Activated CD4-positive, alpha-beta T cell treated with anti-CD3 and anti-CD28 coated beads, Interleukin-2, amount 10 ng/mL, durations not matched to agents 24 days and 14 days (primary cell): ENCODE measurements at regions of chr7 and their contacts with region 1.

Region 1: GRCh38 chr7:142482891-142483658 is 225.2 kb upstream of the PRSS58 start:
- DNase-seq: peak; percentile 86
- H3K4me3 Mint-ChIP-seq: peak overlapping the region; percentile 14
- H3K27ac Mint-ChIP-seq: peak overlapping the region; percentile 78
- H3K4me1 Mint-ChIP-seq: peaks cover 24% of the 10 kb centered on the region
- H3K27me3 Mint-ChIP-seq: no peaks in the 10 kb centered on the region

Region 2: DNA sequence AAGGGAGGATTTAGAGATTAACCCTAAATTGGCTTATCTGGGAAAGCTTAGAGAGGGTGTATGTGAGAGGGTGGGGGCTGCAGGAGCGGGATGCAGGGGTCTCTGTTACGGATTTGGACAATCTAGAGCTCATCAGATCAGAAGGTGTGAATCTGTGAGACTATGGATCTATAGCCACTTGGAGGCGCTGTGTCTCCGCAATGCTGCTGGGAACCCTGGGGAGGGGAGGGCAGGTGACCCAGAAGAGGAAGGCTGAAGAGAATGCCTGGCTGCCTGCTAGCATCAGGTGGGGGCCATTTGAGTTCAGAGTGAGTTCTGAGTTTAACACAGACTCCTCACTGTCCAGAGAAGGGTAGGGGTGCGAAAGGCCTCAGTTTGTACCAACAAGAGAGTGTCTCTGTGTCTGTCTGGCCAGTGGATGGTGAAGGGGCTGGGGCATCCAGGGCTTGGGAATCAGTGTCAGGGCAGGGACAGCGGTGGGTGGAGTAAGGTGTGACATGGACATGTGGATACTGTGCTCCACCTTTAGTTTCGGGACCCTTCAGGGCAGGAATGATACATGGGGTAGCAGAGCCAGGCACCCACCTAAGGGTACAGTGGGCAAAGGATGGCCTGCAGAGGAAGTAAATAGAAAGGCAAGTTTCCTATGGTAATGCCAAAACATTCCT is 37.9 kb before region 1 on chr7:
- intact Hi-C with region 1: loop called (anchors 5 kb)
- DNase-seq: peak; percentile 81
- H3K4me3 Mint-ChIP-seq: no peak overlapping the region
- H3K27ac Mint-ChIP-seq: no peak overlapping the region
- H3K4me1 Mint-ChIP-seq: peaks cover 32% of the 10 kb centered on the region
- H3K27me3 Mint-ChIP-seq: peaks cover 11% of the 10 kb centered on the region

Region 3: GRCh38 chr7:142583386-142583785 is 100.3 kb after region 1 on chr7:
- intact Hi-C with region 1: no loop called
- DNase-seq: peak; percentile 81
- H3K4me3 Mint-ChIP-seq: no peak overlapping the region
- H3K27ac Mint-ChIP-seq: peak overlapping the region; percentile 85
- H3K4me1 Mint-ChIP-seq: peaks cover 40% of the 10 kb centered on the region
- H3K27me3 Mint-ChIP-seq: no peaks in the 10 kb centered on the region